BJ (cell line): ENCODE measurements at regions of chrX and their contacts with region 1.

Region 1: DNA sequence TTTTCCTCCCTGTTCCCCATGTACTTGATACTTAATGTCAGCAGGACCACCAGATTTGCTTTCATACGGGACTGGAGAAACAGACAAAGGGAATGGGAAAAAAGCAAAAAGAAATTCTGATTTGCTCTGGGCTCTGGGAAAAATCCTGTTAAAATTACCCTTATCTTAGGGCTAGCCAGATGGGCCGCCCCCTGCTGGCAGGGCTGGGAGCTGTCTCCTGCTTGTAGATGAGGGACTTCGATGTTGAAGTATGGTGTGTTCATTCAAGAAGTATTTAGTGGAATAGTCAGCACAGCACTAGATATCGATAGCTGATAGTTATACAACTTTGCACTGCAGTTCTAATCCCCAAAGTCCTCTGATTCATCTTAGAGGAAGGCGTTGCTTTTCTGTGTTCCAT is 45.8 kb downstream of the BCORL1 start:
- DNase-seq: peak; percentile 3
- H3K4me3 ChIP-seq: no peak overlapping the region
- H3K27me3 ChIP-seq: no peaks in the 10 kb centered on the region
- CTCF ChIP-seq: peak; percentile 73

Region 2: GRCh38 chrX:129843459-129844306 is 184.5 kb before region 1 on chrX and contains the start of gene ZDHHC9:
- CTCF ChIA-PET with region 1: no interaction called
- POLR2A ChIA-PET with region 1: no interaction called
- DNase-seq: peak; percentile 35
- H3K4me3 ChIP-seq: peak within 1 kb of the TSS; percentile 61
- H3K27me3 ChIP-seq: no peaks in the 10 kb centered on the region
- CTCF ChIP-seq: no peak
- polyA plus RNA-seq, gene ZDHHC9: 47.5 and 48.0 TPM in 2 replicates

Region 3: GRCh38 chrX:130039847-130040246 is 11.7 kb after region 1 on chrX:
- CTCF ChIA-PET with region 1: interaction called, 11 read pairs
- POLR2A ChIA-PET with region 1: no interaction called
- DNase-seq: no peak
- H3K4me3 ChIP-seq: no peak overlapping the region
- H3K27me3 ChIP-seq: no peaks in the 10 kb centered on the region
- CTCF ChIP-seq: no peak

Region 4: GRCh38 chrX:130139474-130140201 is 111.4 kb after region 1 on chrX:
- CTCF ChIA-PET with region 1: no interaction called
- POLR2A ChIA-PET with region 1: no interaction called
- DNase-seq: no peak
- H3K4me3 ChIP-seq: no peak overlapping the region
- H3K27me3 ChIP-seq: no peaks in the 10 kb centered on the region
- CTCF ChIP-seq: no peak